Activated naive CD4-positive, alpha-beta T cell treated with anti-CD3 and anti-CD28 coated beads for 36 hours (primary cell): ENCODE measurements at regions of chr7 and their contacts with region 1.

Region 1: GRCh38 chr7:105198223-105198622 is 184.2 kb downstream of the KMT2E start:
- DNase-seq: no peak
- H3K4me3 Mint-ChIP-seq: no peak overlapping the region
- H3K27ac Mint-ChIP-seq: no peak overlapping the region
- H3K4me1 Mint-ChIP-seq: peaks cover 13% of the 10 kb centered on the region
- H3K27me3 Mint-ChIP-seq: no peaks in the 10 kb centered on the region

Region 2: DNA sequence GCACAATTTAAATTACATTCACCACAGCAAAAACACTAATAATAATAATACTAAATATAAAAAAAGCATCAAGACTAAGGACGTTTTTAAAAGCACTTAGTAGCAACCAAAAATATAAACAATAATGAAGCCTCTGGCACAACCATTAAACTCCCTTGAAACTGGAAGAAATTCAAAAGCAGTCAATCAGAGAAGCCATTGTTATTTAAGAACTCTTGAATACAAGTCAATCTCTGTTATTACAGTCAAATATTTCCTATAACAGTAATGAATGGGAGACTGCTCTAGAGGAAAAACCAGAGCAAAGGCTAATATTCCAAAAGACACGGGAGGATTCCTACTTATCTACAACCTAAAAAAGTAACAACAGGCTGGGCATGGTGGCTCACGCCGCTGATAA is 20.0 kb before region 1 on chr7:
- CTCF ChIA-PET with region 1: interaction called, 3 read pairs
- intact Hi-C with region 1: loop called (anchors 2 kb)
- DNase-seq: no peak
- H3K4me3 Mint-ChIP-seq: no peak overlapping the region
- H3K27ac Mint-ChIP-seq: no peak overlapping the region
- H3K4me1 Mint-ChIP-seq: peaks cover 6% of the 10 kb centered on the region
- H3K27me3 Mint-ChIP-seq: no peaks in the 10 kb centered on the region